ENCODE measurements at regions of chr11 and their contacts with region 1.

Region 1: DNA sequence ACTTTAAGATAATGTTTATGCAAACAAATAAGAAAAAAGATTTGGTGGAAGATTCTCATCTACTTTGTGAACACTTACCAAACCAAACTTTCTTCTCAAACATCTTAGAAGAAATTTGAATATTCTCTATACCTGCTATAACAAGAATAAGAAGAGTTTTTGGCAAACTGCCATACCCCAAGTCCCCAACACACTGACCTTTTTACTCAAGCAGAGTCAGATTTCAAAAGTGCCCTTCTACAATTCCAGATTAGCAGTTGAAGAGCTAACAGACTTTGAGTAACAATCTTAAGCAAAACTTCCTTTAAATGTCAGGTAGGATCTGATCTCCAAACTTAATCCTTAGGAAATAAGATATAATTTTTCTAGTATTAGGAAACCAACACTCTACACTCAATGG is 33.9 kb downstream of the TSG101 start:
- DNase-seq: no peak
- H3K4me3 Mint-ChIP-seq: peak overlapping the region; percentile 33
- H3K27ac Mint-ChIP-seq: peak overlapping the region; percentile 19
- H3K4me1 Mint-ChIP-seq: peaks cover 45% of the 10 kb centered on the region
- H3K27me3 Mint-ChIP-seq: no peaks in the 10 kb centered on the region
- CTCF ChIP-seq: no peak

Region 2: DNA sequence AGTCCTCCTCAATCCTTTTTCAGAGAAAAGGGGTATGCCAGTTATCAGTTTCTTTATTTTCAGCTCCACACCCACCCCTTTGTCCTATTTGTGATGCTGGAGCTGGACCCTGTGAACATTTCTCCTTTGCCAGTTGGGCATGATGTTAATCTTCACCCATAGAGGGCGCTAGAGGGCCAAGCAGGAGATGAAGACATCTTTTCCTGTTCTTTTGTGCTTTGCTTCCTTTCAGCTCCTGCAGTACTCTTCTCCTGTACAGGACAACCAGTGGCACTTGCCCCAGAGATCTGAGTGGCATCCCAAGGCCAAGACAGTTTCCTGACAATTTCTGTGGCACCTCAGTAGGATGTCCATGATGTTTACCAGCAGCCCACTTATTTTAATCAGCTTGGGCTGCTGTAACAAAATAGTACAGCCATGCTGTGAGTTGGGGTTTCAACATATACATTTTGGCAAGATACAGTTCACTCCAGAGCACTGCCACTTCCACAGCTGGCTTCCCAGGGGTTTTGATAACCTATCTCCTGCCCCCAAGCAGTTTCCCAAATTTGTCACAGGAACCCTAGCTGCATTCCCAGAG is 249.0 kb before region 1 on chr11:
- CTCF ChIA-PET with region 1: no interaction called
- intact Hi-C with region 1: loop called (anchors 5 kb)
- DNase-seq: peak; percentile 76
- H3K4me3 Mint-ChIP-seq: no peak overlapping the region
- H3K27ac Mint-ChIP-seq: no peak overlapping the region
- H3K4me1 Mint-ChIP-seq: peaks cover 21% of the 10 kb centered on the region
- H3K27me3 Mint-ChIP-seq: no peaks in the 10 kb centered on the region
- CTCF ChIP-seq: peak; percentile 83

Region 3: GRCh38 chr11:18254781-18255361 is 238.0 kb before region 1 on chr11:
- CTCF ChIA-PET with region 1: no interaction called
- intact Hi-C with region 1: no loop called
- DNase-seq: no peak
- H3K4me3 Mint-ChIP-seq: no peak overlapping the region
- H3K27ac Mint-ChIP-seq: no peak overlapping the region
- H3K4me1 Mint-ChIP-seq: no peaks in the 10 kb centered on the region
- H3K27me3 Mint-ChIP-seq: no peaks in the 10 kb centered on the region
- CTCF ChIP-seq: no peak

Region 4: DNA sequence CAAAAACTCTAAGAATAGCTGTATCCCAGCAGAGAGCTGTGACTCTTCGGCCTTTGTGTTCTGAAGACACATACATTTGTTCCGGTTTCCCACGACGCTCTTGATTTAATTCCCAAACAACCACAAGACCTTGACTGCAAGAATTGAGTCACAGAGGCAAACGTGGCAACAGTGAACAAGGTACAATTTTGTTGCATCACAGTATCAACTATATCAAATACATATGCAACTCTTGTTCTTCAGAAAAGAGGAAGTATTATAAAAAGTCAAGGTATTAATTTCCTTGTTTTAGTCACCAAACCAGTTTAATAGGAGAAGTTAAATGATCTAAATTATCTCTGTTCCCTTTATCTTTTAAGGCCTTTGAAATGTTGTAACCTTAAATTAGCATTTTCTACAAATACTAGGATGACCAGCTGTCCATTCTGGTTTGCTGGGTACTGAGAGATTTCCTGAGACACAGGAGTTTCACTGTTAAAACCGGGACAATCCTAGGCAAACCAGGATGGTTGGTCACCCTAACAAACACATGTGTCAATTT is 182.0 kb before region 1 on chr11:
- CTCF ChIA-PET with region 1: no interaction called
- intact Hi-C with region 1: loop called (anchors 10 kb)
- DNase-seq: peak; percentile 26
- H3K4me3 Mint-ChIP-seq: no peak overlapping the region
- H3K27ac Mint-ChIP-seq: peak overlapping the region; percentile 74
- H3K4me1 Mint-ChIP-seq: peaks cover 33% of the 10 kb centered on the region
- H3K27me3 Mint-ChIP-seq: no peaks in the 10 kb centered on the region
- CTCF ChIP-seq: no peak

Region 5: DNA sequence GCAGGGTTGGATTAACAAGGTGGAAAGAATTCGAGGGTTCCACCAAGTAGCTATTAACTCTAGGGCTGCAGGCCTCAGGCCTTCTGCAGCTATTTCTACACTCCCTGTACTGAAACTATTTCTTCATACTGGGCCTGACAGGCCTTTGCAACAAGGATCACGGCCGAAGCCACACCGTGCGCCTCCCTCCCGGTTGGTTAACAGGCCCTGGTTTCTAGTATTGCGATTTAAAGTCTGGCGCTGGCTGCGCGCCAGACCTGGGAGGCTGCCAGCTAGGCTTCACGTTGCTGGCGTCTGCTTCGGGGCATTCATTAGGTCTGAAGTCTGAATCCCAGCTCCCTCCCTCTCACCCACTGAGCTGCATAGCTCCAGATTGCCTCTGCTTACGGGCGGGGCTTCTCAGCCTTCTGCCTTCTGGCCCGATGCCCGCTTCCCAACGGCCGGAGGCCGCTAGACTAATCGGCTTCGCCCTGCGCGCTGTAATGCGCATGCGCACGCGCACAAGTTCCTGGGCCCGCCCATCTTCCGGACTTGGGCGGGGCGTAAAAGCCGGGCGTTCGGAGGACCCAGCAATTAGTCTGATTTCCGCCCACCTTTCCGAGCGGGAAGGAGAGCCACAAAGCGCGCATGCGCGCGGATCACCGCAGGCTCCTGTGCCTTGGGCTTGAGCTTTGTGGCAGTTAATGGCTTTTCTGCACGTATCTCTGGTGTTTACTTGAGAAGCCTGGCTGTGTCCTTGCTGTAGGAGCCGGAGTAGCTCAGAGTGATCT is 97.0 kb before region 1 on chr11:
- CTCF ChIA-PET with region 1: no interaction called
- intact Hi-C with region 1: loop called (anchors 5 kb)
- DNase-seq: peak; percentile 98
- H3K4me3 Mint-ChIP-seq: peak overlapping the region; percentile 98
- H3K27ac Mint-ChIP-seq: peak overlapping the region; percentile 98
- H3K4me1 Mint-ChIP-seq: no peaks in the 10 kb centered on the region
- H3K27me3 Mint-ChIP-seq: no peaks in the 10 kb centered on the region
- CTCF ChIP-seq: no peak

Region 6: DNA sequence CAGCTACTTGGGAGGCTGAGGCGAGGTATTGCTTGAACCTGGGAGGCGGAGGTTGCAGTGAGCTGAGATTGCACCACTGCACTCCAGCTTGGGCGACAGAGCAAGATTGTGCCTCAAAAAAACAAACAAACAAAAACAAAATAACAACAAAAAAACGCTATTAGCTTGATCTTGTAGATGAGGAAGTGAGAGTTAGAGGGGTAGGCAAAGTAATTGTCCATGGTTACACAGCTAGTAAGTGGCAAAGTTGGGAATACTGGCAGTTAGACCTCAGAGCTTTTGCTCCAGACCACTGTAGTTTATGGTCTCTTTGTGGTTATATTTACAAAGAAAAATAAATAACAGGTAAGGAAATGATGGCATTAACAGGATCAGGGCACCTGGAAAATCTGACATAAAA is 65.6 kb before region 1 on chr11:
- CTCF ChIA-PET with region 1: no interaction called
- intact Hi-C with region 1: no loop called
- DNase-seq: no peak
- H3K4me3 Mint-ChIP-seq: no peak overlapping the region
- H3K27ac Mint-ChIP-seq: no peak overlapping the region
- H3K4me1 Mint-ChIP-seq: no peaks in the 10 kb centered on the region
- H3K27me3 Mint-ChIP-seq: no peaks in the 10 kb centered on the region
- CTCF ChIP-seq: no peak

Region 7: DNA sequence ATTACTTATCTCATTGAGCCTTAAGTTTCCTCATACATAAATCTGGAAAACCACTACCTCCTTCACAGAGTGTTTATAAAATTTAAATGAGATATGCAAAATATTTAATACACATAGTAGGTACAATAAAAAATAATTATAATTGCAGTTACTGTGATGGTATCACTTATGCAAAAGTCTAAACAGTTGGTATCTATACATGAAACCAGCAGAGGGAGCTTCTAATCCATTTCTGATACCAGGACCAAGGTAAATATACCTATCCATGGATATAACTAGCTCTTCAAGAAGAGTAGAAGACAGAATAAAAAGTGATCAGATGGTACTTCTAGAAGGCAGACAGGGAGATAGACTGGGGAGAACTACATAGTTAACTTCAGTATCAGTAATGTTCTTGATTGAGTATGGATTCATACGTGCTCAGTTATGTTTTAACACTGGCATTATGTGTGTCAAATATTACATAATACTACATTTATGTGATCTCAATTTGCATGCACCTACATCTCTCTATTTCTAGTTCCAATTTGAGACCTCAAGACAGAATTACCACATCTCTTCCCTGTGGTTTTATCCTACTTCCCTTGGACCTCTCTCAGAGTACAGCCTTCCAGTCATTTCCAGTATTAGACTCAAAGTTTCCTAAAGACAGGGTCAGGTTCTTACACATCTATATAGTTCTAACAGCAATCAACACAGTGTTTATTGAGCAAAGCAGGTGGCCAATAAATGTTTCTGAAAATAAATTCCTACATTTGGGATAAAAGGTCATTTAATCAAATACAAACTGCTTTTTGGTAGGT is 47.5 kb after region 1 on chr11:
- CTCF ChIA-PET with region 1: no interaction called
- intact Hi-C with region 1: no loop called
- DNase-seq: no peak
- H3K4me3 Mint-ChIP-seq: no peak overlapping the region
- H3K27ac Mint-ChIP-seq: no peak overlapping the region
- H3K4me1 Mint-ChIP-seq: no peaks in the 10 kb centered on the region
- H3K27me3 Mint-ChIP-seq: no peaks in the 10 kb centered on the region
- CTCF ChIP-seq: no peak

Region 8: GRCh38 chr11:18567081-18567480 is 74.2 kb after region 1 on chr11:
- CTCF ChIA-PET with region 1: no interaction called
- intact Hi-C with region 1: no loop called
- DNase-seq: no peak
- H3K4me3 Mint-ChIP-seq: no peak overlapping the region
- H3K27ac Mint-ChIP-seq: no peak overlapping the region
- H3K4me1 Mint-ChIP-seq: no peaks in the 10 kb centered on the region
- H3K27me3 Mint-ChIP-seq: no peaks in the 10 kb centered on the region
- CTCF ChIP-seq: no peak